Activated CD8-positive, alpha-beta T cell treated with anti-CD3 and anti-CD28 coated beads, Interleukin-2, amount 10 ng/mL, durations not matched to agents 7 days and 5 days (primary cell): ENCODE measurements at regions of chr20 and their contacts with region 1.

Region 1: DNA sequence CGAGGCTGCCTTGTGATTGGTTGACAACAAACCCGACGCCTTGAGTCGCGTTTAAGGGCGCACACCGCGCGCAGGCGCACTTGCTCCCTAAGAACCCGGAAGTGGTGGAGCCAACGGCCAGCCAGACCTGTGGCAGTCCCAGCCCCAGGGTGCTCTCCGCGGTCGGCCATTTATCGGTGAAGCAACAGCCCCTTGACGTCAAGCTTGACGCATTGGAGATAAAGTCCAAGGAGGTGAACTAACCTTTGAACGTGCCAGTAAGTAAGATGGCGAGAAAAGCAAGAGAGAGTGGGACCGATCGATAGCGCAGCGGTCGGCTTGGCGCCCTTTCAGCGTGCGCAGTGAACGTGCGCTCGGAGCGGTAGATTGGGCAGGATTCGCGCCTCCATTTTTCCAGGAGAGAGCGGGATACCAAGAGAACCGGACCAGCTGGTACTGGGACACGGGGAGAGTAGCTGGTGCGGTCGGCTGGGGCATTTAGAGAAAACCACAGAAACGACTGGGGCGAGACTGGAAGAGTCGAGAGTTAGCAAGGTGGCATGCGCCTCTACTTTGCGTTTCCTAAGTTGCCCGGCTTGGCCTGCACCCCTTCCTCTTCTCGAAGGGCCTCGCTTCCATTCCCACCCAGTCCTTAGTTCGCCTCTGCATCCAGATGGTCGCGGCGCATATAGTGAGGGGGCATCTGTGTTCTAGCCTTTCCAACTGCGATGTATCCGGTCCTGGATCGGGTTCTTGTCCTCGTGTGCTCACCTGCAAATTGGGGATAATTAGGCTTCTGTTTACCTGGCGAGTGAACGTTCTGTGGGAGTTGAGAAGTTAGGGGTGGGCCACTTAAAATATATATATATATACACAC is at the start of gene CSTF1:
- DNase-seq: peak; percentile 99
- ATAC-seq: peak; percentile 95
- H3K4me3 Mint-ChIP-seq: no peak within 1 kb of the TSS
- H3K27ac Mint-ChIP-seq: no peak within 1 kb of the TSS
- H3K4me1 Mint-ChIP-seq: peaks cover 58% of the 10 kb centered on the region
- H3K27me3 Mint-ChIP-seq: no peaks in the 10 kb centered on the region
- total RNA-seq, gene CSTF1: 60.5 to 66.3 TPM

Region 2: DNA sequence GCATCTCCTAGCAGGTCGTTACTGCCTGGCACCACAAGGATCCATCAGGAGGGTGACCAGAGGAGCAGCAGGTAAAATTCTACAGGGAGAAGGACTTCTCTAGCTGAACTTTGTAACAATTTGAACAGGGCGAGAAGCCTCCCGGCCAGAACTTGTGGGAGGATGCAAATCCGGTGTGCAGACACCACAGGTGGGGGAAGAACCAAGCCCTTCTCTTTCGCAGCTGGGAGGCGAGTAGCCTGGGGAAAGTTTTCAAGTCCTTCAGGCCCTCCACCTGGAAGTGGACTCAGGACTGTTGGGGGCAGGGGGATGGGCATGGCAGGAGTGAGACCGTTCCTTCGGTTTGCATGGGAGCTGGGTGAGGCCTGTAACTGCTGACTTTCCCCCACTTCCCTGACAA is 76.5 kb before region 1 on chr20:
- CTCF ChIA-PET with region 1: no interaction called
- POLR2A ChIA-PET with region 1: no interaction called
- DNase-seq: no peak
- ATAC-seq: no peak
- H3K4me3 Mint-ChIP-seq: no peak overlapping the region
- H3K27ac Mint-ChIP-seq: no peak overlapping the region
- H3K4me1 Mint-ChIP-seq: peaks cover 6% of the 10 kb centered on the region
- H3K27me3 Mint-ChIP-seq: peaks cover 5% of the 10 kb centered on the region

Region 3: GRCh38 chr20:56352345-56353055 is 40.0 kb before region 1 on chr20:
- CTCF ChIA-PET with region 1: no interaction called
- POLR2A ChIA-PET with region 1: no interaction called
- DNase-seq: no peak
- ATAC-seq: no peak
- H3K4me3 Mint-ChIP-seq: no peak overlapping the region
- H3K27ac Mint-ChIP-seq: no peak overlapping the region
- H3K4me1 Mint-ChIP-seq: no peaks in the 10 kb centered on the region
- H3K27me3 Mint-ChIP-seq: peaks cover 12% of the 10 kb centered on the region

Region 4: GRCh38 chr20:56368351-56369134 is 24.0 kb before region 1 on chr20:
- CTCF ChIA-PET with region 1: no interaction called
- POLR2A ChIA-PET with region 1: interaction called, 13 read pairs
- DNase-seq: no peak
- ATAC-seq: no peak
- H3K4me3 Mint-ChIP-seq: no peak overlapping the region
- H3K27ac Mint-ChIP-seq: peak overlapping the region; percentile 37
- H3K4me1 Mint-ChIP-seq: peaks cover 9% of the 10 kb centered on the region
- H3K27me3 Mint-ChIP-seq: no peaks in the 10 kb centered on the region

Region 5: DNA sequence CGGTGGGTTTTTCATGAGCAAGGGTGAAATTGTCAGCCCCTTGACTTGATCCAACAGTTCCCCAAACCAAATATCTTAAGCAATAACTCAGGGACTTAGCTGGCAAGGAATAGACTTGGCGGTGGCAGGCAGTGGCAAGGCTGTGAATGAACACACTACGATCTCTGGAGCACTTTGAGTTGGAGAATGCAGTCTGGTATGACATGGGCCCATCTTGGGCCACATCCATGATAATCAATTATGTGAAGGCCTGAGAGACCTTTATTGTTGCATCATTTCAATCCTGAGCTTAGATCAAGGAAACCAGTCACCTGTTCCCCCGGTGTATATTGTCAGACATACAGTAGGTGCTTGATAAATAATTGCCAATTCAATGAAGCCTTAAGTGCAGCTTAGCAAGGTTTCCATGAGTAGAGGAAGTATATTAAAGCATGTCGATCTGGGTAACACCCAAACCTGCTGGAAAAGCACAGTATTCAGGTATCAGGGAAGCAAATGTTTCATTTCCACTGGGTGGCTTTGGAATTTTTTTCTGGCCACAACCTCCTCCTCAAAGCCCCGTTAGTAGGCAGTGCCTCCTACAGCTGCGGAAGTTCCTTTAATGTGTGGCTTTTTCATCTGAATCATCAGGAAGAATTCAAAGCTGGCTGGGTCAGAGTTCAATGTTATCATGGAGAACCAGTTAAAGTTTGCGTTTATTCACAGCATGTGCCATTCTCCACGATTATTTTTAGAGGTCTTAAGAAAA is 29.7 kb after region 1 on chr20:
- CTCF ChIA-PET with region 1: interaction called, 7 read pairs
- POLR2A ChIA-PET with region 1: interaction called, 26 read pairs
- DNase-seq: peak; percentile 19
- ATAC-seq: no peak
- H3K4me3 Mint-ChIP-seq: peak overlapping the region; percentile 38
- H3K27ac Mint-ChIP-seq: peak overlapping the region; percentile 77
- H3K4me1 Mint-ChIP-seq: peaks cover 70% of the 10 kb centered on the region
- H3K27me3 Mint-ChIP-seq: no peaks in the 10 kb centered on the region

Region 6: GRCh38 chr20:56439771-56440291 is 47.3 kb after region 1 on chr20:
- CTCF ChIA-PET with region 1: interaction called, 5 read pairs
- POLR2A ChIA-PET with region 1: interaction called, 14 read pairs
- DNase-seq: peak; percentile 43
- ATAC-seq: peak; percentile 42
- H3K4me3 Mint-ChIP-seq: peak overlapping the region; percentile 42
- H3K27ac Mint-ChIP-seq: peak overlapping the region; percentile 88
- H3K4me1 Mint-ChIP-seq: peaks cover 62% of the 10 kb centered on the region
- H3K27me3 Mint-ChIP-seq: no peaks in the 10 kb centered on the region

Region 7: DNA sequence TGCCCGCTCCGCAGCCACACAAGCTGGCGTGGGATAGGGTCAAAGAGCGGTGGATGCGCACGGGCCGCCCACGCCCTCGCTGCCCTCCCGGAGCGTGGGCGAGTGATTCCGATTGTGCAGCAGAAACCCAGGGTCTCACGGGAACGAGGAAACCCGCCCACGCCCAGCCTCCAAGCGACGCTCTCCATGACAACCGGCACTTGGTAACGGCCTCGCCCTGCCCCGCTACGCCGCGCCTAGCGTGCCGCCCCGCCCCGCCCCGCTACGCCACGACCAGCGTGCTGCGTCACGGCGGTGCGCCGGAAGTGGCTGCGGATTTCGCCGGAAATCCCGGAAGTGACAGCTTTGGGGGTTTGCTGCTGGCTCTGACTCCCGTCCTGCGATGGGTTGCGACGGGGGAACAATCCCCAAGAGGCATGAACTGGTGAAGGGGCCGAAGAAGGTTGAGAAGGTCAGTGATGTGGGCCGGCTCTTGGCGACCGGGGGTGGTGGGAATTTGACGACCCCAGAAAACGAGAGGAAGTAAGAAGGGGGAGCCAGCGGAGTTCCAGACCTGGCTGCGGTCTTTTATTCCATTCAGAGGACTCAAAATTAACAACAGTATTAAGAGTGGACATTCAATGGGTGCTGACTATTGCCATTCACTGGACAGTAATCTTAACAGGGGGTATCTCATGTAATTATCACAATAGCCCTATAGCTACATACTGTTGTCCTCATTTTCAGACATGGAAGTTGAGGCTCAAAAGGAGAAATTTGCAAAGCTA is 76.0 kb after region 1 on chr20 and contains the start of gene RTF2:
- CTCF ChIA-PET with region 1: interaction called, 9 read pairs
- POLR2A ChIA-PET with region 1: interaction called, 10 read pairs
- DNase-seq: peak; percentile 96
- ATAC-seq: peak; percentile 93
- H3K4me3 Mint-ChIP-seq: peak within 1 kb of the TSS; percentile 100
- H3K27ac Mint-ChIP-seq: peak within 1 kb of the TSS; percentile 100
- H3K4me1 Mint-ChIP-seq: peaks cover 65% of the 10 kb centered on the region
- H3K27me3 Mint-ChIP-seq: no peaks in the 10 kb centered on the region
- total RNA-seq, gene RTF2: 118 to 125 TPM

Region 8: DNA sequence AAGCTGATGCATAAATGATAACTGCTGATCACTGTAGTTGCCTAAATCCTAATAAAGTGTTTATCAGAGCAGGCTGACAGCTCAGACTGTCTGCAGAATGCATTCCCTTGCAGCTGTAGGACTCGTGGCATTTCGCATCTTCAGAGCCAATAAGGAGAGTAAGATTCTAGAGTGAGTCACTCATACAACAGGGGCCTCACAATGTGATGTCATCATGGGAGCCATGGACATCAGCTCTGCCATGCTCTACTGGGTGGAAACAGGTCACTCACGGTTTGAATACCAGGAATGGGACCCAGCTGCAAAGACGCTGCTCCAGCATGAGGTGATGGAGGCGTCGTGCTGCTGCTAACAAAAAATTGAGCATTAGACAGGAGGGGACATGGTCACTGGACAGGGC is 147.9 kb after region 1 on chr20:
- CTCF ChIA-PET with region 1: no interaction called
- POLR2A ChIA-PET with region 1: no interaction called
- DNase-seq: no peak
- ATAC-seq: no peak
- H3K4me3 Mint-ChIP-seq: no peak overlapping the region
- H3K27ac Mint-ChIP-seq: no peak overlapping the region
- H3K4me1 Mint-ChIP-seq: no peaks in the 10 kb centered on the region
- H3K27me3 Mint-ChIP-seq: no peaks in the 10 kb centered on the region